ENCODE measurements at regions of chr1 and their contacts with region 1.

Region 1: GRCh38 chr1:223860051-223860622 is 14.4 kb upstream of the TP53BP2 start:
- DNase-seq: no peak
- H3K4me3 ChIP-seq: no peak overlapping the region
- H3K27me3 ChIP-seq: 0 out of 2 replicates have a peak, but pooled peaks cover 1% of the 10 kb centered on the region
- CTCF ChIP-seq: no peak

Region 2: GRCh38 chr1:223845810-223846682 is 14.1 kb before region 1 on chr1 and contains the start of gene TP53BP2:
- CTCF ChIA-PET with region 1: interaction called, 16 read pairs
- POLR2A ChIA-PET with region 1: interaction called, 10 read pairs
- DNase-seq: no peak
- H3K4me3 ChIP-seq: peak within 1 kb of the TSS; percentile 82
- H3K27me3 ChIP-seq: no peaks in the 10 kb centered on the region
- CTCF ChIP-seq: peak; percentile 71
- polyA plus RNA-seq, gene TP53BP2: 18.6 and 23.8 TPM in 2 replicates